ENCODE measurements at regions of chr11 and their contacts with region 1.

Region 1: GRCh38 chr11:68282141-68282970 is 10.6 kb upstream of the C11orf24 start:
- DNase-seq: no peak
- ATAC-seq: no peak
- H3K4me3 ChIP-seq: no peak overlapping the region
- H3K27ac ChIP-seq: no peak overlapping the region
- H3K4me1 ChIP-seq: no peaks in the 10 kb centered on the region
- H3K27me3 ChIP-seq: no peaks in the 10 kb centered on the region
- CTCF ChIP-seq: no peak
- POLR2A ChIP-seq: no peak

Region 2: GRCh38 chr11:68223275-68223674 is 59.1 kb before region 1 on chr11:
- in situ Hi-C with region 1: loop called in 1 of 4 experiments (anchors 10 kb)
- intact Hi-C with region 1: no loop called
- DNase-seq: no peak
- ATAC-seq: no peak
- H3K4me3 ChIP-seq: no peak overlapping the region
- H3K27ac ChIP-seq: no peak overlapping the region
- H3K4me1 ChIP-seq: no peaks in the 10 kb centered on the region
- H3K27me3 ChIP-seq: no peaks in the 10 kb centered on the region
- CTCF ChIP-seq: no peak
- POLR2A ChIP-seq: no peak